ENCODE measurements at regions of chr10 and their contacts with region 1.

Region 1: GRCh38 chr10:95544783-95545500 is 16.2 kb downstream of the SORBS1 start:
- DNase-seq: no peak
- H3K4me3 ChIP-seq: no peak overlapping the region
- H3K27ac ChIP-seq: no peak overlapping the region
- H3K4me1 ChIP-seq: no peaks in the 10 kb centered on the region
- H3K27me3 ChIP-seq: no peaks in the 10 kb centered on the region
- CTCF ChIP-seq: no peak

Region 2: GRCh38 chr10:95474228-95475002 is 70.5 kb before region 1 on chr10:
- CTCF ChIA-PET with region 1: no interaction called
- dilution Hi-C with region 1: loop called (anchors 5 kb)
- in situ Hi-C with region 1: no loop called
- intact Hi-C with region 1: no loop called
- DNase-seq: peak; percentile 40
- H3K4me3 ChIP-seq: no peak overlapping the region
- H3K27ac ChIP-seq: no peak overlapping the region
- H3K4me1 ChIP-seq: peaks cover 8% of the 10 kb centered on the region
- H3K27me3 ChIP-seq: no peaks in the 10 kb centered on the region
- CTCF ChIP-seq: no peak